ENCODE measurements at regions of chr18 and their contacts with region 1.

Region 1: GRCh38 chr18:58321986-58322385 is 278.0 kb downstream of the NEDD4L start:
- DNase-seq: peak; percentile 84
- H3K4me3 ChIP-seq: no peak overlapping the region
- H3K27ac ChIP-seq: no peak overlapping the region
- H3K4me1 ChIP-seq: peaks cover 18% of the 10 kb centered on the region
- H3K27me3 ChIP-seq: no peaks in the 10 kb centered on the region
- CTCF ChIP-seq: peak; percentile 72

Region 2: GRCh38 chr18:58194028-58194427 is 128.0 kb before region 1 on chr18:
- CTCF ChIA-PET with region 1: interaction called, 3 read pairs
- POLR2A ChIA-PET with region 1: no interaction called
- intact Hi-C with region 1: loop called (anchors 5 kb)
- DNase-seq: no peak
- H3K4me3 ChIP-seq: no peak overlapping the region
- H3K27ac ChIP-seq: no peak overlapping the region
- H3K4me1 ChIP-seq: no peaks in the 10 kb centered on the region
- H3K27me3 ChIP-seq: no peaks in the 10 kb centered on the region
- CTCF ChIP-seq: peak; percentile 40; the same call in 1 of the 2 replicates